Heart right ventricle (tissue), 16 donors: ENCODE measurements at regions of chr12 and their contacts with region 1.

Region 1: GRCh38 chr12:81303935-81304334 is 226.1 kb downstream of the ACSS3 start:
- DNase-seq: no peak
- ATAC-seq: no peak
- H3K4me3 ChIP-seq: no peak overlapping the region
- H3K27ac ChIP-seq: no peak overlapping the region
- H3K4me1 ChIP-seq: no peaks in the 10 kb centered on the region
- H3K27me3 ChIP-seq: no peaks in the 10 kb centered on the region
- CTCF ChIP-seq: no peak

Region 2: GRCh38 chr12:81268664-81268926 is 35.3 kb before region 1 on chr12:
- intact Hi-C with region 1: no loop called
- DNase-seq: no peak
- ATAC-seq: no peak
- H3K4me3 ChIP-seq: no peak overlapping the region
- H3K27ac ChIP-seq: no peak overlapping the region
- H3K4me1 ChIP-seq: no peaks in the 10 kb centered on the region
- H3K27me3 ChIP-seq: no peaks in the 10 kb centered on the region
- CTCF ChIP-seq: peak in 1 of 9 donors; percentile 17

Region 3: DNA sequence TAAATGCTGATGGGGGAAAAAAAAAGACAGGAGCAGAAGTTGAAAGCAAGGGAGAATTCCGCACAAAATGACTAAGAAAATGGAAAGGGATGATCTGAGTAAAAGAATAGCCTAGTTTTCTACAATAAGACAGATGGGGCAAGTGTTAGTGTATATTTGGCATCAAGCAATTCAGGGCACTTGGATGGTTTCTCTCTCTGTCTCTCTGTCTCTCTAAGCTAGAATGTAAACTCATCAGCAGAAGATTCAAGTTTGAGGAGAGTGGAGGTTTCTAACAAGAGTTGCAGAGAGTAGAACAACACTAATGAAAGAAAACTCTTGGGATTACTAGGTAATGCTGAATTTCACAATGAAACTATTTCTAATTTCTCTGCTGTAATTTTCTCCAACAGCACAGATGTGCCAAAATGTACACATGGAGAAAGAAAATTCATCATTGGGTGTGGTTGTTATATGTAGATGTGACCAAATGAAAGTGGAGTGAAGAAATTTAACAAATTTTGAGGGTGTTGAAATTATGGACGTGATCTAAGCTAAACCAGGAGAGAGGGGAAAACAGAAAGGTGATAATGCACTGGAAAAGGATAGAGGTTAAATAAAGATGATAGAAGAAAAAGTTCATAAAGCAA is 11.1 kb after region 1 on chr12:
- intact Hi-C with region 1: loop called in 1 of 10 experiments (anchors 1 kb)
- DNase-seq: no peak
- ATAC-seq: no peak
- H3K4me3 ChIP-seq: no peak overlapping the region
- H3K27ac ChIP-seq: no peak overlapping the region
- H3K4me1 ChIP-seq: no peaks in the 10 kb centered on the region
- H3K27me3 ChIP-seq: no peaks in the 10 kb centered on the region
- CTCF ChIP-seq: no peak